ENCODE measurements at regions of chr1 and their contacts with region 1.

Region 1: GRCh38 chr1:37434292-37434907 is 40.0 kb upstream of the ZC3H12A start:
- DNase-seq: peak; percentile 69
- ATAC-seq: peak; percentile 85
- H3K4me3 Mint-ChIP-seq: no peak overlapping the region
- H3K27ac Mint-ChIP-seq: no peak overlapping the region
- H3K4me1 Mint-ChIP-seq: no peaks in the 10 kb centered on the region
- H3K27me3 Mint-ChIP-seq: peaks cover 16% of the 10 kb centered on the region
- CTCF ChIP-seq: no peak

Region 2: DNA sequence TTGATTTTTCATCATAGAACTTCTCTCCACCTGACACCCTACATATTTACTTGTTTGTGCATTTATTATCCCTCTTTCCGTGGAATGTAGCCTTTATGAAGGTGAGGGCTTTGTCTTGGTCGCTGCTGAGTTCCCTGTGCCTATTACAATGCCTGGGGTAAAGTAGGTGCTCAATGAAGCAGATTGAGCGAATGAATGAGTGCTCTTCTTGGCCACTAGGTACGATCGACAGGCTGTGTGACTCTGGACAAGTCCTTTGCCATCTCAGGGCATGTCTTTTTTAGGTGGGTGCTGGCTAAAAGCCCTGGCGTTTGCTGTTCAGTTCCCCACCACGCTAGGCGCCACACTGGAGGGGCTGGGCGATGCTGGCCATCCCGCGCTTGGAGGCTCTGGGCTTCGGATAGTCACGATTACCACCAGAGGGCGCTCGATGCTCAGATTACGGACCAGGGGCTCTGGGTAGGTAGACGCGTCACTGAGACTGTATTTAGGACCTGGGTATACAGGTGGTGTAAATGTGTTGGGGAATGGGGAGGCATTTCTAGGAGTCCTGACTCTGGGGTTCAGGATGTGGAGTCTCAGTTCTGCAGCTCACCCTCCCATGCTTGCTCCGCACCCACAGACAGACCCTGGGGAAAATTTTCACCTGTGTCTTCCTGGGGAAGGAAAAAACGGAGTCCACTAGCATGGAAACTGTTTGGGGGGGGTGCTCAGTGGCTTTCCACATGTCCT is 880.6 kb before region 1 on chr1:
- CTCF ChIA-PET with region 1: interaction called, 5 read pairs
- POLR2A ChIA-PET with region 1: no interaction called
- intact Hi-C with region 1: loop called (anchors 1 kb)
- DNase-seq: peak; percentile 37
- ATAC-seq: peak; percentile 70
- H3K4me3 Mint-ChIP-seq: no peak overlapping the region
- H3K27ac Mint-ChIP-seq: no peak overlapping the region
- H3K4me1 Mint-ChIP-seq: peaks cover 6% of the 10 kb centered on the region
- H3K27me3 Mint-ChIP-seq: peaks cover 30% of the 10 kb centered on the region
- CTCF ChIP-seq: no peak

Region 3: DNA sequence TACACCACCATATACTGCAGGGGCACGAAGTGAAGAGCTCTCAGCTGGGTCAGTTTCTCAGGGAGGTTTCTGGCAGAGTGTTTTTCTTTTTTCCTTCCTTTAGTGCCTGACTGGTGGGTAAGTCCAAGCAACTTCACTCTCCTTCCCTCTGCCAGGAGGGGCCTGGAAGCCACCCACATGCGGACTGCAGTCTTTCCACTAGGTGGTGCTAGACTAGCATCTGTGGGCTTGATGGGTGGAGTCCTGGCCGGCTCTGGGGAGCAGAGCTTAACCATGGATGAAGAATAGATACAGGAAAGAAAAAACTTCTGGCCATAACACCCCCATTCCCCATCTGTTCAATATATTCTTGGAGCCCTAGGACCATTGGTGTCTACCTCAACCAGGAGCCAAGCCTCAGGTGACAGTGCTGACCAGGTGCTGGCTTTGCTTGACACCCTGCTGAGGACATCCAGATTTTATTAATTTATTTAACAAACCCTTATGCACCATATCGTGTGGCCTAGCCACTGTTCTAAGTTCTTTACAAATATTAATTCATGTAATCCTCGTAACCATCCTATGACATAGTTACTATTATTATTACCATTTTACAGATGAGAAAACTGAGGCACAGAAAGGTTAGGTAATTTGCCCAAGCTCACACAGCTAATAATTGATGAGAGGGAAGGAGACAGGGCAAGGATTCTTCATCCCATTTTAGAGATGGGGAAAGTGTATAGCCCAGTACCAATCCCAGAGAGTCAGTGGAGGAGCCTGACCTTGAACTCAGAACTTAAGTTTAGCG is 825.0 kb before region 1 on chr1:
- CTCF ChIA-PET with region 1: interaction called, 3 read pairs
- POLR2A ChIA-PET with region 1: no interaction called
- intact Hi-C with region 1: loop called (anchors 1 kb)
- DNase-seq: no peak
- ATAC-seq: peak; percentile 31
- H3K4me3 Mint-ChIP-seq: no peak overlapping the region
- H3K27ac Mint-ChIP-seq: no peak overlapping the region
- H3K4me1 Mint-ChIP-seq: no peaks in the 10 kb centered on the region
- H3K27me3 Mint-ChIP-seq: no peaks in the 10 kb centered on the region
- CTCF ChIP-seq: no peak

Region 4: DNA sequence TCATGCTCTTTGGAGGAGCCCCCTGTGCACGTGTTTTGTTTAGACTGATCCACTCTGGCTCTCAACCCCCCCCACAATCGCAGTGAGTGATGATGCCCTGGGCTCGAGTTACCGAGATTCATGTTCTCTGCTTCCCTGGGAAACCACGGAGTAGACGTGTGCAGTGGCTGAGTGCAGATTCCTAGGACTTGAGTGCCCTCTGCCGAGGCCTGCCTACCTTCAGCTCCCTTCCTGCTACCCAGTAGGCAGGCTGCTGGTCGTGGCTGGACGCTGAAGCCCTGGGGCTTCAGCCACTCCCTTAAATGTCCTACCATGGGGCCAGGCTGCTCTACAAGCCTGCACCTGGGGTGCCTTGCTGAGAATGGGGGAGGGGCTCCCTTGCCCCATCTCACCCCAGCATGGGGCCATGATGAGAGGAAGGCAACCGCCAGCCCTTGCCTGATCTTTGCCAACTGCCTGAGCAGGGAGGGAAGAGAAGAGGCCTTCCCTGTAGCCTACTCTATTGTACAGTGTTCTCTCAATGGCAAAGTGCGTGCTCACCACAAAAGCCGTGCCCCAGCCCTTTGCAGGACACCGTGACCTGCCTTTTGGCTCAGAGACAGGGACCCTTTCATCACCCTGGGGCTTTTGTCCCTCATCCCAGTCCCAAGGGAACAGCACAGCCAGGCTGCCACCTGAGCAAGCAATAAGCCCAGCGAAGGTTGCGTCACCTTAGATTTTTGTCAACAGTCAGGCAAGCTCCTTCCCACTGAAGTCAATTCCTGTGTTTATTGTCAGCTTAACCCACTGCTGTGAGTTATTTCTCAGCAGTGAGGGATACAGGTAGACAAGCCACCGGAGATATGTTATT is 395.9 kb before region 1 on chr1:
- CTCF ChIA-PET with region 1: no interaction called
- POLR2A ChIA-PET with region 1: no interaction called
- intact Hi-C with region 1: loop called (anchors 10 kb)
- DNase-seq: no peak
- ATAC-seq: no peak
- H3K4me3 Mint-ChIP-seq: no peak overlapping the region
- H3K27ac Mint-ChIP-seq: no peak overlapping the region
- H3K4me1 Mint-ChIP-seq: peaks cover 23% of the 10 kb centered on the region
- H3K27me3 Mint-ChIP-seq: peaks cover 62% of the 10 kb centered on the region
- CTCF ChIP-seq: no peak

Measured in activated B cell treated with CpG ODN at 0.5 μM for 24 hours (primary cell).